PC-9 (cell line): ENCODE measurements at regions of chr11 and their contacts with region 1.

Region 1: DNA sequence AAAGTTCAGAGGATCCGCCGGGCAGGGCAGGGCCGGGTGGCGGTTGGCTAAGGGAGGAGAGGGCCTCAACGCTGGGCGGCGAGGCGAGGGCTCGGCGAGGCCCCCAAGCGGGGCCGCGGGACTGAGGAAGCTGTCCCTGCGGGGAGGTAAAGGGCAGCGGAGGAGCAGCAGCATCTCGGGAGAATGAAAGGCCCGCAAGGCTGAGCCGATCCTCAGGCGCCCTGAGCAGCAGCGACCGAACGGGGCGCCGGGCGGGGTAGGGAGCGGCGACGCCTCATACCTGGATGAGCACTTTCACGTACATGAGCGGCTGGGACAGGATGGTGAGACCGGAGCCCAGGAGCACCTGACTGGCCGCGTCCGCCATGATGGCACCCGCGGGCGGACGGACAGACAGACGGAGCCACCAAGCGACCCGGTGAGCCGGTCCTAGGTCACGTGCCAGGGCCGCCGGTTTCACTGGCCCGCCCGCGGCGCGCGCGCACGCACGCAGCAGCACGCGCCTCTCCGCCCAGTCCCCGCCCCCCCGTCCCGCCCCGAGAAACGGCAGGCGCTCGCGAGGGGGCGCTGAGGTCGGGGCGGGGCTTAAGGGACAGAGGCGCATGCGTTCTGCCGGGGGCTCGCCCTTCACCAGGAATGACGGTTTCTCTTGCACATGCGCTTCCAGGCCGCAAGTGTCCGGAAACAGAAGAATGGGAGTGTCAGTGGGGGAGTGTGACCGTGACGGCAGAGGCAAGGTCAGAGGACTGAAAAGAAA is at the start of gene MTCH2:
- DNase-seq: peak; percentile 86 to 98
- H3K4me3 ChIP-seq: peak within 1 kb of the TSS; percentile 94
- H3K27ac ChIP-seq: peak within 1 kb of the TSS; percentile 74
- H3K4me1 ChIP-seq: peaks cover 9% of the 10 kb centered on the region
- H3K27me3 ChIP-seq: no peaks in the 10 kb centered on the region
- CTCF ChIP-seq: peak; percentile 18; the same call in 1 of the 2 replicates
- total RNA-seq, gene MTCH2: 147 and 167 TPM in 2 replicates

Region 2: DNA sequence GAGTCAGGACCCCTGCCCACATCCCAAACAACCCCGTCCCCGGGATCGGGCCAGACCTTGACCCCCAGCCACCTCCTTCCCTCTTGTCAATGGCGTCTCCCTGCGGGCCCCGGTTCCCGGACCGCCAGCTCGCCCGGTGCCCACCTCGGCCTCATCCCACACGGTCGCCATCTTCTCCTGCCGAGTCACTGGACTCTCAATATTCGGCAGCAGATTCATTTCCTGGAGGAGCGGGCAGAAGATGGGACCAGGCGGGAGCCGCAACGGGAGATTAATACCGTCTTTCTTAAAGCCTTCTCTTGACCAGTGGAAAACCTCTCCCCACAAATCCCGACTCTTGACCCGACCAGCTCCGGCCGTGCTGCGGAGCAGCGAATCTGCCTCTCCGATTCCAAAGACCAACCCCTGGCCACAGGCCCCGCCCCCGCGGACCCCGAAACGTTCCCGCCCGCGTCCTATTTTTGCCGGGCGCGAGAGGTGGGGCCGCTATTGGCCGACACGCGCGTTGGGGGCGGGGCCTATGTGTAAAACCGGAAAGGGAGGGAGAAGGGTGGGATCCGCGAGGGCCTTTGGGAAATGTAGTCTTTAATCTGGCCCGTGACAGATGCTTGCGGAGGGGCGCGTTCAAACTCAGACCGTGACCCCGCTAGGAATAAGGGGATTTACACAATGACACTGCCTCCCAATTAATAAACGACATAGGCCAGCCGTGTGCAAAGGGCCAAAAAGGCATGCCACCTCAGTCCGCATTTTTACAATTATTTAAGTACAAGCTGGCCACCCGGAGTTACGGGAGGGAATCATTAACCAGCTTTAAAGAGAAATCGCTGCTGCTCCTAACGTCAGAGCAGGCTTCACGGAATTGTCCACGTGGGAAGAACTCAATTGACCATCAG is 216.0 kb before region 1 on chr11 and contains the start of gene PSMC3:
- CTCF ChIA-PET with region 1: no interaction called
- POLR2A ChIA-PET with region 1: interaction called, 17 read pairs
- intact Hi-C with region 1: no loop called
- DNase-seq: peak; percentile 89 to 99
- H3K4me3 ChIP-seq: peak within 1 kb of the TSS; percentile 86
- H3K27ac ChIP-seq: peak within 1 kb of the TSS; percentile 73
- H3K4me1 ChIP-seq: peaks cover 18% of the 10 kb centered on the region
- H3K27me3 ChIP-seq: no peaks in the 10 kb centered on the region
- CTCF ChIP-seq: no peak
- total RNA-seq, gene PSMC3: 160 and 222 TPM in 2 replicates

Region 3: GRCh38 chr11:47715082-47715669 is 72.9 kb after region 1 on chr11 and contains the start of gene AGBL2:
- CTCF ChIA-PET with region 1: no interaction called
- POLR2A ChIA-PET with region 1: interaction called, 4 read pairs
- intact Hi-C with region 1: loop called (anchors 1 kb)
- DNase-seq: peak; percentile 57 to 76
- H3K4me3 ChIP-seq: peak within 1 kb of the TSS; percentile 80
- H3K27ac ChIP-seq: no peak within 1 kb of the TSS
- H3K4me1 ChIP-seq: peaks cover 7% of the 10 kb centered on the region; the same call in 1 of the 2 replicates
- H3K27me3 ChIP-seq: no peaks in the 10 kb centered on the region
- CTCF ChIP-seq: no peak
- total RNA-seq, gene AGBL2: 13.1 and 21.9 TPM in 2 replicates